ENCODE measurements at regions of chr2 and their contacts with region 1.

Region 1: GRCh38 chr2:97806738-97807618 is 93.6 kb downstream of the ZAP70 start:
- DNase-seq: no peak
- H3K4me3 ChIP-seq: no peak overlapping the region
- H3K27ac ChIP-seq: no peak overlapping the region
- H3K4me1 ChIP-seq: peaks cover 0 to 11% (median 9%) of the 10 kb centered on the region in 4 donors
- H3K27me3 ChIP-seq: no peaks in the 10 kb centered on the region
- CTCF ChIP-seq: peak; percentile 91 to 97 (median 93)
- EP300 ChIP-seq: no peak
- POLR2A ChIP-seq: no peak

Region 2: GRCh38 chr2:98188351-98189049 is 381.5 kb after region 1 on chr2:
- intact Hi-C with region 1: loop called (anchors 5 kb)
- DNase-seq: no peak
- H3K4me3 ChIP-seq: no peak overlapping the region
- H3K27ac ChIP-seq: no peak overlapping the region
- H3K4me1 ChIP-seq: no peaks in the 10 kb centered on the region
- H3K27me3 ChIP-seq: no peaks in the 10 kb centered on the region
- CTCF ChIP-seq: peak in 2 of 3 experiments; percentile 8 to 14
- EP300 ChIP-seq: no peak
- POLR2A ChIP-seq: no peak

Region 3: DNA sequence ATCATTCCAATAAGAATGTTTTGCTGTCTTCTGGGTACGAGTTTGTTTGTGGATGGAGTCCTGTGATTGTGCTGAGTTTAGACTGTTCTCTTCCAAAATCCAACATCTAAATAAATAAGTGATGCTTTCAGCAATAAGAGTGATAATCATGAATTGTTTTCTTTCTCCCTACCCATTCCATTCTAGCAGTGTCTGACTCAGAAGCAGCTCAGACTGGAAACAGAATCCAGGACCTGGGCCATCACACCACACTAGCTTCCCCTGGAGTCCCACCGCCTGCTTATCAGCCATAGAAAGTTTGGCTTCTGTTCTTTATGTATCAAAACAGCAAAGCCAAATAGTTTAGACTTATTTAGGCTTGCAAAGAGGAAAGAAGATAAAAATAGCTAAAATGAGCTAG is 462.9 kb after region 1 on chr2:
- intact Hi-C with region 1: loop called (anchors 5 kb)
- DNase-seq: no peak
- H3K4me3 ChIP-seq: no peak overlapping the region
- H3K27ac ChIP-seq: no peak overlapping the region
- H3K4me1 ChIP-seq: peaks cover 0 to 23% (median 9%) of the 10 kb centered on the region in 4 donors
- H3K27me3 ChIP-seq: no peaks in the 10 kb centered on the region
- CTCF ChIP-seq: no peak
- EP300 ChIP-seq: no peak
- POLR2A ChIP-seq: no peak

Region 4: GRCh38 chr2:98385050-98385699 is 578.2 kb after region 1 on chr2:
- intact Hi-C with region 1: loop called (anchors 2 kb)
- DNase-seq: peak; percentile 93
- H3K4me3 ChIP-seq: no peak overlapping the region
- H3K27ac ChIP-seq: no peak overlapping the region
- H3K4me1 ChIP-seq: no peaks in the 10 kb centered on the region
- H3K27me3 ChIP-seq: no peaks in the 10 kb centered on the region
- CTCF ChIP-seq: peak; percentile 87 to 94 (median 90)
- EP300 ChIP-seq: no peak
- POLR2A ChIP-seq: no peak

Measured in esophagus muscularis mucosa (tissue), 4 donors.